ENCODE measurements at regions of chrX and their contacts with region 1.

Region 1: DNA sequence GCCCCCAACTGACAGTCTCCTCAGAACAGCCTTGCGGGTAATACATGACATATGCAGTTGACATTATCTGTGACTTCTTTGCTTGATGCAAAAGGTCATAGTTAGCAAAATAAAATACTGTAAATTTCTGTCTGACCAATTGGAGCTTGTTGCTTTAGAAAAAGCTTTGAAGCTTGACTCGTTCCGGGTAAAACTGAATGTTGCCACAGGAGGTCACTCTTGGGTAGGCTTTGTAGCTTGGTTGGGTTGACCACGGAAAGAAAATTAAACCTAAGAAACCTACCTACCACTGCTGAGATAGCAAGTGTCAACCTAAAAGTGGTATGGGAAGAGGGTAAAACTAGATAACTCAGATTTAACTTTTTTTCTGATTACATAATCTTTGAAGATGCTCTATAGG is 23.2 kb downstream of the PRPS2 start:
- DNase-seq: no peak
- H3K4me3 ChIP-seq: no peak overlapping the region
- H3K27ac ChIP-seq: no peak overlapping the region
- H3K4me1 ChIP-seq: no peaks in the 10 kb centered on the region
- H3K27me3 ChIP-seq: no peaks in the 10 kb centered on the region
- CTCF ChIP-seq: peak; percentile 41 to 51 (median 50)
- EP300 ChIP-seq: no peak
- POLR2A ChIP-seq: no peak

Region 2: GRCh38 chrX:11724122-11725017 is 1090.0 kb before region 1 on chrX:
- intact Hi-C with region 1: no loop called
- DNase-seq: no peak
- H3K4me3 ChIP-seq: no peak overlapping the region
- H3K27ac ChIP-seq: no peak overlapping the region
- H3K4me1 ChIP-seq: peaks cover 0 to 4% (median 0%) of the 10 kb centered on the region in 4 donors
- H3K27me3 ChIP-seq: no peaks in the 10 kb centered on the region
- CTCF ChIP-seq: peak; percentile 65 to 73 (median 70)
- EP300 ChIP-seq: no peak
- POLR2A ChIP-seq: no peak

Region 3: GRCh38 chrX:12891915-12892506 is 77.6 kb after region 1 on chrX:
- intact Hi-C with region 1: loop called (anchors 2 kb)
- DNase-seq: no peak
- H3K4me3 ChIP-seq: no peak overlapping the region
- H3K27ac ChIP-seq: no peak overlapping the region
- H3K4me1 ChIP-seq: no peaks in the 10 kb centered on the region
- H3K27me3 ChIP-seq: no peaks in the 10 kb centered on the region
- CTCF ChIP-seq: no peak
- EP300 ChIP-seq: no peak
- POLR2A ChIP-seq: no peak